ENCODE measurements at regions of chr14 and their contacts with region 1.

Region 1: DNA sequence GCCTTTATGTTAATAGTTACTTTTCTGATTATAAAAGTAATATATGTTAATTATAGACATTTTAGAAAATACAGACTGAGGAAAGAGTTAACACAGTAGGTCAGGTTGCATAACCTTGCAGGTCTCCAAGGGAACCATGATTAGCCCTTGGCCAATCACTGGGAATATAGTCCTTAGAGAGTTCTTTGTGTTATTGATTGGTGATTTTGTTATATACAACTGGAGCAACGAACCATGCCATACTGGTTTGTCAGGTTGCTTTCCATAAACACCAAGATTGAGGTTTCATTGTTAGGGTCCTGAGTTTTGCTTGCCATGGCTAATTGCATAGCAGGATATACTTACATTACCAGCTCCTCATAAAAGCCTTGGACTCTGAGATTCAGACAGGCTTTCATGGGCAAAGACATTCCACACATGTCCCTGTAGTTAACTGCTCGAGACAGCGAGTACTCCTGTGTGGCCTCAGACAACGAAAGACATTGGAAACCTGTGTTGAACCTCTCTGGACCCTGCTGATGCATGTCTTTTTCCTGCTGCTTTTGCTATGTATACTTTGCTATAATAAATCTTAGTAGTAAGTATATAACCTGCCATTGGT is 33.7 kb downstream of the MAPK1IP1L start:
- DNase-seq: no peak
- H3K4me3 ChIP-seq: no peak overlapping the region
- CTCF ChIP-seq: no peak

Region 2: DNA sequence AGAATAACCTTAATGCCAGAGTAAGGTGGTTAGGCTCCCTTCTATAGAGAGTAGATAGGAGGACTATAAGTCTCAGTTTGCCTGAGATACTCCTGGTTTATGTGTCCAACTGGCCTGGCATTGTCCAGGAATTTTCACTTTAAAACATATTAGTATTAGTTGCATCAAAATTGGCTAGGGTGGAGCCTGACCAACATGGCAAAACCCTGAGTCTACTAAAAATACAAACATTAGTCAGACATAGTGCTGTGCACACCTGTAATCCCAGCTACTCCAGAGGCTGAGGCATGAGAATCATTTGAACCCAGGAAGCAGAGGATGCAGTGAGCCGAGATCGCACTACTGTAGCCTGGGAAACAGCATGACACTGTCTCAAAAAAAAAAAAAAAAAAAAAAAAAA is 70.2 kb before region 1 on chr14:
- CTCF ChIA-PET with region 1: no interaction called
- POLR2A ChIA-PET with region 1: no interaction called
- DNase-seq: no peak
- H3K4me3 ChIP-seq: no peak overlapping the region
- CTCF ChIP-seq: no peak

Region 3: DNA sequence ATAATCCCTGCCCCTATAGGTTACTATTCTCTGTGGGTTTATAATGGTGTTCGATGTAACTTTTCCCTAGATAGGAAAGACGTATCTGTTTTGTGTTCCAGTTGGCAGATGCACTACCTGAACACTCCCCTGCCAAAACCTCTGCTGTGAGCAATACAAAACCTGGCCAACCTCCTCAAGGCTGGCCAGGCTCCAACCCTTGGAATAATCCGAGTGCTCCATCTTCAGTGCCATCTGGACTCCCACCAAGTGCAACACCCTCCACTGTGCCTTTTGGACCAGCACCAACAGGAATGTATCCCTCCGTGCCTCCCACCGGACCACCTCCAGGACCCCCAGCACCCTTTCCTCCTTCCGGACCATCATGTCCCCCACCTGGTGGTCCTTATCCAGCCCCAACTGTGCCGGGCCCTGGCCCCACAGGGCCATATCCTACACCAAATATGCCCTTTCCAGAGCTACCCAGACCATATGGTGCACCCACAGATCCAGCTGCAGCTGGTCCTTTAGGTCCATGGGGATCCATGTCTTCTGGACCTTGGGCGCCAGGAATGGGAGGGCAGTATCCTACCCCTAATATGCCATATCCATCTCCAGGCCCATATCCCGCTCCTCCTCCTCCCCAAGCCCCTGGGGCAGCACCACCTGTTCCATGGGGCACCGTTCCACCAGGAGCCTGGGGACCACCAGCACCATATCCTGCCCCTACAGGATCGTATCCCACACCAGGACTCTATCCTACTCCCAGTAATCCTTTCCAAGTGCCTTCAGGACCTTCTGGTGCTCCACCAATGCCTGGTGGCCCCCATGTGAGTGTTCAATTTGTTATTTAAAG is 22.4 kb before region 1 on chr14:
- CTCF ChIA-PET with region 1: no interaction called
- POLR2A ChIA-PET with region 1: no interaction called
- DNase-seq: no peak
- H3K4me3 ChIP-seq: no peak overlapping the region
- CTCF ChIP-seq: no peak

Region 4: DNA sequence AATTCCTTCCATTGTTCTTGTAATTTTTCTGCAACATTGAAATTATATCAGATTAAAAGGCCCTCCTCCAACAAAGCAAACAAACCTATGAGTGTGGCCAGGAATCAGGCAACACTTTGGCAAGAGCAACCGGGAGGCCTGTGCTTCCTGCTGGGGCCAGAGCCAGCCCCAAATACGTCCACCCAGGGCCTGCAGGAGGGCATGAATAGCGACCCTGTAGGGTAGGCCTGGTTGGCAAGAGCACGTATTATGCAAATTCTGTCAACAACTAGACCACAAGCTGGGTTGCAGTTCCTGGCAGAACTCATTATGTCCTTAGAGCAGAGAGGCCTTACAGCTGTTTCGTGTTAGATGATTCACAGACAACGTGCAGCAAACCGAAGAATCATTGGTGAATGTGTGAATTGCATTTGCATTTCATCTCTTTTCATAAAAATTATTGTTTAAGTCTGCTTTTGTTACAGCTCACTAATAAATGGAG is 17.0 kb after region 1 on chr14:
- CTCF ChIA-PET with region 1: interaction called, 16 read pairs
- POLR2A ChIA-PET with region 1: no interaction called
- DNase-seq: peak; percentile 98
- H3K4me3 ChIP-seq: no peak overlapping the region
- CTCF ChIP-seq: no peak

Region 5: DNA sequence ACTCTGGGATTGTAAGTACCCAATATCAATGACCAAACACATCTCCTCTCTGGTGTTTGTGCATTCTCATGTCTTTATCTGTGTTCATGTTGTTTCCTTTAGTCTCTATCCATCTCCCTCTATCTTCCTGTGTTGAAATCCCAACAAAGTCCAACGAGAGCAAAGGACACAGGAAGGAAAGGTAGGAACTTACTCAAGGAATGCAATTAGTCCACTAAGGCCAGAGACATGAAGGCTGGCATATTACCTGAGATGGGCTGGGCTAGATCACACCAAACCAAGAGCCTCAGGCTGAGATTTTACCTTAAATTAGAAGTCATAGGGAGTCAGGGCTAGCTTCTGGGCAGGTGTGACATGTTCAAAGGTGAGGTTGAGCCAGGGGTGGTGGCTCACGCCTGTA is 29.6 kb after region 1 on chr14:
- CTCF ChIA-PET with region 1: no interaction called
- POLR2A ChIA-PET with region 1: no interaction called
- DNase-seq: no peak
- H3K4me3 ChIP-seq: no peak overlapping the region
- CTCF ChIP-seq: no peak

Region 6: GRCh38 chr14:55212634-55213033 is 127.5 kb after region 1 on chr14:
- CTCF ChIA-PET with region 1: no interaction called
- POLR2A ChIA-PET with region 1: no interaction called
- DNase-seq: no peak
- H3K4me3 ChIP-seq: no peak overlapping the region
- CTCF ChIP-seq: no peak

Measured in AG04449 (cell line).